ENCODE measurements at regions of chr6 and their contacts with region 1.

Region 1: DNA sequence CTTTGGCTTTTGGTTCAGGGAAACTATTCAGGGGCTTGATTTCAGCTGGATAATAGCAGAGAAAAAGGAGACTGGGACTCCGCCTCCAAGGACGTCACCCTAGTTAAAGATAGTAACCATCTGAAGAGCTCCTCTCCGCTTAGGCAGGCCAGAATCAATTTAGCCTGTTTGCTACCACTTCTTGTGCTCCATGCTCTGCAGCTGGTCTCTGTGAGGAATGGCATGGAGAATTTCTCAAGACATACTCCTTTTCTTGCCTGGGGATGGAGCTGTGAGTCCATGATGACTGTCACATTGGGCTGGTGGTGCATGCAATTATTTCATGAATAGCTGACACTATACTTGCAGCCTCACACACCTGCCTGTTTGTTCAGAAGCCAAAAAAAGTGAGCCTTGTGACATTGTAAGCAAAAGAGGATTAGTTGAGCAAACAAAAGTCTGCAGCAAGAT is 61.4 kb downstream of the TXLNB start:
- DNase-seq: no peak

Region 2: DNA sequence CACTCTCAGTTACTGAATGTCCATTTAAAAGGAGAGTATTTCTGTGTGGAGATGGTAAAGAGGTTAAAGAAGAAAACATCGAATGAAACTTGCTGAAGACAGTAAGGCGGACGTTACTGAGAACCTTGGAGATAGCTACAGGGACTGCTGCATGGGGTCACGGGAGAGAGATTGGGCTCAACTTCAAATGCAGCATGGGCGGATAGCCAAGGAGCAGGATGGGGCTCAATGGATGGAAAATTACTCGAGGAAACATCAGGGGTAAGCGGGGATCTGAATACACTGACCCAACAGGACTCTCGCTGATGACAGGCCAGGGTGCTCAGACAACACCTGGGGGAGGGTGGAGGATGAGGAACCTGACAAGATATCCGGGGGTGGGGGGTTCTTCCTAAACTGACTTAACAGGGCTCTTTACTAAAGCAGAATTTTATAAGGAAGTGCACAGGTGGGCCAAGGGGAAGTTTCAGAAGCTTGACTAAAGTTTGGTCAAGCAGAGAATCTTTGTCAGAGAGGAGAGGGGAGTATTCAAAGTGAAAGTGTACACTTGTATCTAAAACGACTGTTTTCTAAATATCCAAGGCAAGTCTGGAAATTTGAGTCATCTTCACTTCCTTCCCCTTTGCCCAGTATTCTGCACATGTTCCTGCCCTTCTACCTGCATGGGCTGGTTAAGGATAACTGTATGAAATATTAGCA is 411.8 kb before region 1 on chr6:
- intact Hi-C with region 1: no loop called
- DNase-seq: no peak

Region 3: DNA sequence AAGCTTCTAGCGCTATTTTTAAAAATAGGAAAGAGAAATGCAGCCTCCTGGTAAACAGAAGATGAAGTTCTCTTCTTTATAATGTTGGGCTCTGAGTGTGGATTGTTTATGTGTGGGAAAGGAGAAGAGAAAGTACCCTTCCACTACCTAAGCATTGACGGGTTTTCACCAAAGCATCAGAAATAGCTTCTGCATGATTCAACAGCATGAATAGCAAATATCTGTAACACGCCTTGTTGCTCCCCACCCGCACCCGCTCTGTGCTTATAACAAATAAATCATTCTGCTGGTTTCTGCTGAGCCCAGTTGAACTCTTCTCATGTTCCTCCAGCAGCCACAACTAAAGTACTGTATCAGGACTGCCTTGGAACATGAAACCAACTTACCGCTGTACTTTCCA is 40.6 kb after region 1 on chr6:
- intact Hi-C with region 1: loop called in 1 of 2 experiments (anchors 1 kb)
- DNase-seq: no peak

Region 4: DNA sequence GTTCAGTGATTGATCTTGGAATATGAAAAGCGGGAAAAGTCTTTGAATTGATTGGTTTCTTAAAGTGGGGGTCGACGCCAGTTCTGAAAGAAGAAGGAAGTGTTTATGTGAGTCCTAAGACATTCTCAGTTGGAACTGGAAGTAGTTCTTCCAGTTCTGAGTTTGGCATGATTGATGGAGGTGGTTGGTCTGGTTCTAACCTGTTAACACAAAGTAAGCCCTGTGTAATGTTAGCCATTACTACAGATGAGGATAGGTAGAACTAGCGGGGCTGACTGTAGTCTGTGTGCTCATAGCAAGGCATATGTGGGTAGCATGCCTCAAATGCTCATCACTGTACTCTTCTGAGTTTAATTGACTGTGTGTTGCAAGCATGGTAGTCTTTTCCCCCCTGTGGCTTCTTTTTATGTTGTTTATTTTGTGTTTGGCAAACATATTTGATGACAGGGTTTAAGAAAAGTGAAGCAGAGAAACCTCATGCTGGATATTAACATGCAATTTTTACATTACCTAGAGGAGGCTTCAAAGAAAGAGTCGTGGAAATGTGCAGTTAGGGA is 119.1 kb after region 1 on chr6:
- intact Hi-C with region 1: loop called in 1 of 2 experiments (anchors 10 kb)
- DNase-seq: no peak

Region 5: GRCh38 chr6:139416146-139416545 is 185.7 kb after region 1 on chr6:
- intact Hi-C with region 1: no loop called
- DNase-seq: no peak